ENCODE measurements at regions of chr17 and their contacts with region 1.

Region 1: DNA sequence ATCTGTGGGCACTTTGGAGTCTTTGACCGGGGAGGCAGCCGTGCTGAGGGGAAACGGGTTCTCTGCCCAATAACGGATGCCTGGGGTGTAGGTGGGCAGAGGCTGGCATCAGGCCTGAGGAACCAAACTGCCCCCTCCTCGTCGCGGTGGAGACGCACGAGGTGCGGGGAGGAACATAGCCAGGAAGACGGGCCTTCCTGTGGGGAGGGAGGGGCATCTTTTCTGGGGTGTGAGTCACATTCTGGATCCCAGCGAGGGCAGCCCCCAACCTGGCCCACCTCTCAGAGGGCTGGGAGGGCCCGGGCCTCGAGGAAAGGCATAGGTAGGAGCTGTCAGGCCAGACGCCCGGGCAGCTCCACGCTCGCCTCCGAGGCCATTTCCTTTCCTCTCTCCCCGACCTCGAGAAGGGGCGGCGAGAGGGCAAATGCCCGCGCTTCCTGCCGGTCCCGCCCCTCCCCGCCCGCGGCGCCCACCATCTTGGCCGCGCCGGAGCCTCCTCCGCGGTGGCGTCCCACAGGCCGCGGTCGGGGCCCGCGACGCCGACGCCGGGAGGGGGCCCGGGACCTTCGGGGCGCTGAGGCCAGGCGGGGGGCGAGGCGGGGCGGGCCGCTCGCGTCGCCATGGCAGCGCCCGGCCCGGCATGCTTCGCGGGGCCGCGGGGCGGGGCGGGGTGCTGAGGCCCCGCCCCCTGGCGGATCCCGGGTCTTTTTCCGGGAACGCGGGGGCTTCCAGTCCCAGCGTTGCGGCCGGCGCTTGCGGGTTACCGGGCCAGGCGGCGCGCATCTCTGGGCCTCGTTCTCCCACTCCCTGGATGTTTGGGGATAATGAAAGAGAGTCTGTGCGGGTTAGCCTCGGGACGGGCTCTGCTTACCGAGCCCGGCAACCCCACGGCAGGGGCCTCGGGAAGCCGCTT is 13.2 kb downstream of the RAI1 start:
- DNase-seq: peak; percentile 71 to 78
- ATAC-seq: peak; percentile 68 to 83 (median 74)
- H3K4me3 ChIP-seq: peak overlapping the region; percentile 61 to 95 (median 77)
- H3K27ac ChIP-seq: peak overlapping the region; percentile 96 to 100 (median 99)
- H3K4me1 ChIP-seq: peaks cover 52 to 95% (median 87%) of the 10 kb centered on the region in 9 donors
- H3K27me3 ChIP-seq: no peaks in the 10 kb centered on the region
- CTCF ChIP-seq: peak in 1 of 9 donors; percentile 5

Region 2: DNA sequence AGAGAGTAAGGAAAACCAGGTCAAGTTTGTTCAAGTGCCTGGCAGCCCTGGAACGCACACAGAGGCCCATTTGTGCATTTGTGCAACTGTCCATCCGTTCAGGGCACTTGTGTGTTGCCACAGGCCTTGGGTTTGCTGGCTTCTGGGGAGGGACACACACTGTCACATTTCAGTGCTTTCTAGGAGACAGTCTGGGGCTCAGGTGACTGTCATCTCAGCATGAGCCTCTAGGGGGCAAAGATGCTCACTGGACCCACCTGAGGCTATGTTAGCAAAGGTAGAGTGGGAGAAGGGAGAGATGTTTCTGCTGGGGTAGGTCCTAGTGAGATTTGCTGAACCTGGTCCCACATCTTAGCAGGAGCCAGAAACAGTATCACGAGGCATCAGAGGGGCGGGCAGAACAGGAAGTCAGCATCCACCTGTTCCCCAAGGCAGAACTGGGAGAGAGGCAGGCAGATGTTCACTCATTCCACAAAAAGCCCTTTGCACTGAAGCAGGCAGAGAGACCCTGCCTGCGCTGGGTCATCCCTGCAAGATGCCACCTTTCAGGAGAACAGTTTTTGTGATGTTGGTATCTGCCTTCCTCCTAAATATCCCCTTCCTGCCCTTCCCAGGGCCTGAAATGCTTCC is 35.3 kb after region 1 on chr17:
- intact Hi-C with region 1: loop called in 2 of 10 experiments (anchors 2 to 5 kb)
- DNase-seq: no peak
- ATAC-seq: peak in 3 of 8 donors; percentile 26 to 37 (median 33)
- H3K4me3 ChIP-seq: no peak overlapping the region
- H3K27ac ChIP-seq: peak overlapping the region in 4 of 10 donors; percentile 34 to 52 (median 47)
- H3K4me1 ChIP-seq: peaks cover 20 to 67% (median 38%) of the 10 kb centered on the region in 9 donors
- H3K27me3 ChIP-seq: peaks cover 0 to under 1% (median 0%) of the 10 kb centered on the region in 7 donors
- CTCF ChIP-seq: peak; percentile 20 to 59 (median 50)

Region 3: DNA sequence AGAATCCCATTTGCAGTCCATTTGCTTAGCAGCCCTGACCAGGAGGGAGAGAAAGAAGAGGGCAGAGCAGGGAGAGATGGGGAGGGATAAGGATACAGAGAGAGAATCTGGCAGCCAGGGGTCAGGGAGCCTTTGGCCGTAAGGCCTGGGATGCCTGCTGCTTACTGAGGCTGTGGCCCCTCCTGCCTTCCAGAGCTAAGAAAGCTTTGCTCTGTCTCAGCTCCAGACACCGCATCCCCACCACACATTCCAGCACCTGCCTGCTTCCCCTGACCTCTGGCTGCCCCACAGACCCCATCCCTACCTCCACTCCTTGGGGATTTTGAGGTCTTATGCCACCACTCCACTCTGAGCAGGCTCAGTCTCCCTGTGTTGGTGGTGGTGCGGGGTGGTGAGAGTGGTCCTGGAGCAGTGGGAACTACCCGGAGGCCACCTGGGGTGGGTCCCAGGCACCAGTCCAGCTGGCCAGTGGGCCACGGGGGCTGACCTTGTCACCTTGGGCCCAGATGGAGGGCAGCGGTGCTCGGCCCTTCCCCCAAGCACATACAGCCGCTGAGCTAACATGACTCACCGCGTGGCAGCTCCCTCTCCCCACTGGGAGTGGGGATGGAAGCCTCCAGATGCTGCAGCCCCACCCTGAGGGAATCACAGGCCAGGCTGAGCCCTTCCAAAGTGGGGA is 45.1 kb after region 1 on chr17:
- intact Hi-C with region 1: loop called in 3 of 10 experiments (anchors 2 to 5 kb)
- DNase-seq: no peak
- ATAC-seq: peak; percentile 26 to 73 (median 64)
- H3K4me3 ChIP-seq: no peak overlapping the region
- H3K27ac ChIP-seq: peak overlapping the region in 9 of 10 donors; percentile 9 to 79 (median 64)
- H3K4me1 ChIP-seq: peaks cover 22 to 81% (median 71%) of the 10 kb centered on the region in 9 donors
- H3K27me3 ChIP-seq: no peaks in the 10 kb centered on the region
- CTCF ChIP-seq: no peak